ENCODE measurements at regions of chr9 and their contacts with region 1.

Region 1: GRCh38 chr9:20684035-20684872 is at the start of gene FOCAD:
- DNase-seq: peak; percentile 95
- H3K4me3 Mint-ChIP-seq: peak within 1 kb of the TSS; percentile 88
- H3K27ac Mint-ChIP-seq: peak within 1 kb of the TSS; percentile 76
- H3K4me1 Mint-ChIP-seq: peaks cover 17% of the 10 kb centered on the region
- H3K27me3 Mint-ChIP-seq: no peaks in the 10 kb centered on the region
- total RNA-seq, gene FOCAD: 31.7 to 32.2 TPM

Region 2: GRCh38 chr9:19161257-19162025 is 1522.8 kb before region 1 on chr9:
- CTCF ChIA-PET with region 1: no interaction called
- intact Hi-C with region 1: loop called (anchors 5 kb)
- DNase-seq: peak; percentile 87
- H3K4me3 Mint-ChIP-seq: no peak overlapping the region
- H3K27ac Mint-ChIP-seq: peak overlapping the region; percentile 81
- H3K4me1 Mint-ChIP-seq: peaks cover 23% of the 10 kb centered on the region
- H3K27me3 Mint-ChIP-seq: no peaks in the 10 kb centered on the region

Region 3: DNA sequence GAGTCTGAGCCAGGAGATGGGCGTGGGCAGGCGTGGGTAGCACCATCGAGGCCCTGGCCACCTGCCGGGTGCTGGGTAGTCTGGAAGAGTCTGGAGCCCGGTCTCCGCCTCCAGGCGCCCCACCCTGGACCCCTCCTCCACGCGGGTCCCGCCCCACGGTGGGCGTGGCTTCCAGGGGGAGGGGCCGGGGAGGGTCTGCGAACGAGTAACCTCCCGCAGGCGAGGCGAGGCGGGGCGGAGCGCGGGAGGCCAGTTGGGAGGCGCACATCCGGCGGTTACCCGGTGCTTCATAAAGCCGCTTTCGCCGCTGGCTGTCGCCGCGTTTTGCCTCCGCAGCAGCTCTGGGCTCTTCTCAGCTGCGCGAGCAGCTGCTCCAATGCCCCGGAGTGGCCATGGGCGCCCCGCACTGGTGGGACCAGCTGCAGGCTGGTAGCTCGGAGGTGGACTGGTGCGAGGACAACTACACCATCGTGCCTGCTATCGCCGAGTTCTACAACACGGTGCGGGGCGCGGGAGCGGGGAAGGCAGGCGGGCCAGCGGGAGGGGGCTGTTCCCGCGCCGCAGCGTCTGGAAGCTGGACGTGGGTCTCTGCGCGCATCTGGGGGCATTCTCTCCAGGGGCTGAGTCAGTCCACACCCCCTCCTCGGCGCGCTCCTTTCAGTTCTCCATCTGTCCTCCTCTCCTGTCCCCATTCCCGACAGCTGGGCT is 1275.4 kb before region 1 on chr9 and contains the start of gene ACER2:
- CTCF ChIA-PET with region 1: no interaction called
- intact Hi-C with region 1: loop called (anchors 10 kb)
- DNase-seq: peak; percentile 94
- H3K4me3 Mint-ChIP-seq: peak within 1 kb of the TSS; percentile 87
- H3K27ac Mint-ChIP-seq: no peak within 1 kb of the TSS
- H3K4me1 Mint-ChIP-seq: peaks cover 14% of the 10 kb centered on the region
- H3K27me3 Mint-ChIP-seq: no peaks in the 10 kb centered on the region
- total RNA-seq, gene ACER2: 2.0 to 2.2 TPM

Region 4: DNA sequence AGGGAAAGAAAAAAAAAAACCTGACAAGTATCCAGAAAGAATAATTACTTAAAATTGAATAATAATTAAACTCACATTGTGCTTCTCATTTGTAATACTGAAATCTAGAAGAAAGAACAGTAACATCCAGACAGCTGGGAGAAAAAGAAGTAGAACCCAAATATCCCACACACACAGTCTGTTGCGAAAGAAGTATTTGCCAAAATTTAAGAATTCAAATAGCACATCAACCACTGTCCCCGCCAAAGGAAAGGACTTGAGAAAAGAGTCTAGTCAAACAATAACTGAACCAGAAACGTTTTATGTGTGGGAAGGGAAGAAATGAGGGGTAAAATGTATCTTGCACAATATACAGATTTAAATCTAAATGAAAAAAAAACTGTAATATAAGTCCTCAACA is 264.7 kb before region 1 on chr9:
- CTCF ChIA-PET with region 1: no interaction called
- intact Hi-C with region 1: loop called (anchors 5 kb)
- DNase-seq: no peak
- H3K4me3 Mint-ChIP-seq: no peak overlapping the region
- H3K27ac Mint-ChIP-seq: no peak overlapping the region
- H3K4me1 Mint-ChIP-seq: peaks cover 37% of the 10 kb centered on the region
- H3K27me3 Mint-ChIP-seq: no peaks in the 10 kb centered on the region

Region 5: GRCh38 chr9:20558566-20559016 is 125.7 kb before region 1 on chr9:
- CTCF ChIA-PET with region 1: no interaction called
- intact Hi-C with region 1: loop called (anchors 2 kb)
- DNase-seq: peak; percentile 70
- H3K4me3 Mint-ChIP-seq: peak overlapping the region; percentile 36
- H3K27ac Mint-ChIP-seq: peak overlapping the region; percentile 59
- H3K4me1 Mint-ChIP-seq: peaks cover 86% of the 10 kb centered on the region
- H3K27me3 Mint-ChIP-seq: no peaks in the 10 kb centered on the region

Region 6: GRCh38 chr9:20713172-20713571 is 28.9 kb after region 1 on chr9:
- CTCF ChIA-PET with region 1: no interaction called
- intact Hi-C with region 1: no loop called
- DNase-seq: no peak
- H3K4me3 Mint-ChIP-seq: no peak overlapping the region
- H3K27ac Mint-ChIP-seq: no peak overlapping the region
- H3K4me1 Mint-ChIP-seq: peaks cover 5% of the 10 kb centered on the region
- H3K27me3 Mint-ChIP-seq: no peaks in the 10 kb centered on the region

Region 7: DNA sequence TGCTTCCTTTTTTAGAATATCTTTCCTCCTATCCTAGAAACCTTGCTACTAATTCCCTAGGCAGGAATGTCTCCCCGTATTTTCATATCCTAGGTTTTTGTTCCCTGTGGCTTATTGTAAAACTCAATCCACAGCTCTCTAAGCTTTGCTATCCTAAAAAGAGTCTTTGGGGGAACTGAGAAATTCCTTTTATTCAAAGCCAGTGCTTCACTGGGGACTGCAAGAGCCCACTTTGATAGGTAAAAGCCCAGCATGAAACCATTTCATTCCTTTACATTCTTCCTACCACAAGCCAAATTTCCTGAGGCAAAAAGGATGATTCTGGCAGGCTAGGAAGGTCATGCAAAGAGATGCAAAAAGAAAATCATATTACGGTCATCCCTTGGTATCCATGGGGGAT is 353.0 kb after region 1 on chr9:
- CTCF ChIA-PET with region 1: no interaction called
- intact Hi-C with region 1: no loop called
- DNase-seq: no peak
- H3K4me3 Mint-ChIP-seq: no peak overlapping the region
- H3K27ac Mint-ChIP-seq: no peak overlapping the region
- H3K4me1 Mint-ChIP-seq: peaks cover 12% of the 10 kb centered on the region
- H3K27me3 Mint-ChIP-seq: no peaks in the 10 kb centered on the region

Region 8: DNA sequence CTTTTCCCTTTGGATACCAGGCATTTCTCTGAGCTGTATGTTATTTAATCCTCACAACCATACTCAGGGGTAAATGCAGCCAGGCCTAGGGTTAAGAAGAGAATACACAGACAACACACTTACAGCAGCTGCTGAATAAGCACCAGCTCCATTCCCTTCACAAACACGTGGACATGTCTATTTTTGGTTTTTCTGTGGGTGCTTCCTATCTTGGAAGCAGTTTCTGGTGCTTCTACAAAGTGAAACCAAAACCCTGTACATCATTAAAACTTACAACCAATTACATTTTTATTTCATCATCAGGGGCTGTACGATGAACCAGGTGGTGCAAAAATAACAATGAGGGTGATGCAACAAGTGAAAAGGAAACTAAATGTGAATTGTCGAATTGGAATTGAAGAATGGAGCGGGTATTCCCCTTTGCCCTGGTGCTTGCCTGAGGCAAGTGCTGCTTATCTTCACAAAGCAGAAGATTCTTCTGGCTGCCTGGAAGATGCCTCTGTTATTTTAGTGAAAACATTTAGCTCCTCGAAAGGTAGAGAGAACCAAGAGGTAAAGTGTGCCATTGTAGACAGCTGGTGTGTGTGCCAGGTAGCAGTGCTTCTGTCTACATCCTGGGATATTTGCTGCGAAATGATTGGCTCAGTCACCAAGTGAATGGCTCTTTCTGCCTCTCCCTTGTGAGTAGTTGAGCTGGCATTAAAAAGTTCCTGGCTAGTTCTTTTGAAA is 412.1 kb after region 1 on chr9:
- CTCF ChIA-PET with region 1: no interaction called
- intact Hi-C with region 1: loop called (anchors 1 kb)
- DNase-seq: peak; percentile 67
- H3K4me3 Mint-ChIP-seq: peak overlapping the region; percentile 76
- H3K27ac Mint-ChIP-seq: peak overlapping the region; percentile 94
- H3K4me1 Mint-ChIP-seq: peaks cover 39% of the 10 kb centered on the region
- H3K27me3 Mint-ChIP-seq: no peaks in the 10 kb centered on the region

Measured in activated naive CD4-positive, alpha-beta T cell treated with anti-CD3 and anti-CD28 coated beads for 36 hours (primary cell).